ENCODE measurements at regions of chrX and their contacts with region 1.

Region 1: GRCh38 chrX:37315511-37316248 is 33.5 kb upstream of the PRRG1 start:
- DNase-seq: peak; percentile 37
- H3K4me3 ChIP-seq: no peak overlapping the region
- H3K27ac ChIP-seq: peak overlapping the region; percentile 86
- H3K4me1 ChIP-seq: peaks cover 31% of the 10 kb centered on the region
- H3K27me3 ChIP-seq: no peaks in the 10 kb centered on the region
- CTCF ChIP-seq: no peak
- POLR2A ChIP-seq: no peak

Region 2: DNA sequence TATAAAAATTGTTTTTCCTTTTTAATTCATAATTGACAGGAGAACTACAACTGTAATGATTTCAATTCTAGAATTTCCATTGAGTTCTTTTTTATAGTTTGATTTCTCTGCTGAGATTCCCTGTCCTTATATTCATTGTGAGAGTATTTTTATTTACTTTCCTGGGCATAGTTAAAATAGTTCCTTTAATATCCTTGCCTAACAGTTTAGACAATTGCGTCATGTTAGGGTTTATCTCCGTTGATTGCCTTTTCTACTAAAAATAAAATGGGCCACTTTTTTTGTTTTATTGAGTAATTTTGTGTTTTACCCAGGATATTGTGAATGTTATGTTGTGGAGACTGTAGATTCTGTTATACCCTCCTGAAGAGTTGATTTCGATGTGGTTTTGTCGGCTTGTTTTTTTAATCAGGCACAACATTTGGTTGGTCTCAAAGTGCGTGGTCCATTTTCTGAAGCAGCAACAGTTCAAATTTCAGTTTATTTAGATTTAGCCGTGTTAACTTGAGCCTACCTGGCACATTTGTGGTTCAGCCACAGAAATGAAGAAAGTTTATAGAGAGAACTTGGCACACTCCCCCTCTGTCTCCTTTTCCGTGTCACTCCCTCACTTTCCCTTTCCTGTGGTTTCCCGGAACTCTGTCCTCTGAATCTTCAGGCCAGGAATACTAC is 17.4 kb after region 1 on chrX:
- CTCF ChIA-PET with region 1: no interaction called
- POLR2A ChIA-PET with region 1: no interaction called
- dilution Hi-C with region 1: no loop called
- intact Hi-C with region 1: no loop called
- DNase-seq: no peak
- H3K4me3 ChIP-seq: no peak overlapping the region
- H3K27ac ChIP-seq: no peak overlapping the region
- H3K4me1 ChIP-seq: peaks cover 6% of the 10 kb centered on the region
- H3K27me3 ChIP-seq: no peaks in the 10 kb centered on the region
- CTCF ChIP-seq: no peak
- POLR2A ChIP-seq: no peak

Region 3: DNA sequence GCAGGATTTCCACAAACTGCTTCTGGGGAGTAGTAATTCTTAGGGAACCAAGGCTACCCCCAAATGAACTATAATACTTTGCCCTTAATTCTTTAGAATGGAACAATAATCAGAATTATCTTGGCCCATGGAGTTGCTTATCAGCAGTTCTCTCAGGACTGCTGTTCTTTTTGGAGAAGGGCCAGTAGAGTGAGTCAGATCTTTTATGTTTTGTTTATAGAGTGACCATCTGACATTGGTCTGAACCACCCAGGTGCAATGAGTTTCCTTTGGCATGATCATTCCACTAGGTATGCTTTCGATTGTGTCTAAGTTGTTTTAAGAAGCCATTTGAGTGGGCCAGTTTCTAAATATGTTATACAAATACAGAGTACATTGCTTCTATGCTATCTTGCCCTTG is 65.2 kb after region 1 on chrX:
- CTCF ChIA-PET with region 1: no interaction called
- POLR2A ChIA-PET with region 1: no interaction called
- dilution Hi-C with region 1: no loop called
- intact Hi-C with region 1: loop called (anchors 2 kb)
- DNase-seq: peak; percentile 91
- H3K4me3 ChIP-seq: no peak overlapping the region
- H3K27ac ChIP-seq: peak overlapping the region; percentile 53
- H3K4me1 ChIP-seq: peaks cover 37% of the 10 kb centered on the region
- H3K27me3 ChIP-seq: no peaks in the 10 kb centered on the region
- CTCF ChIP-seq: no peak
- POLR2A ChIP-seq: peak; percentile 26

Region 4: GRCh38 chrX:37594755-37595382 is 279.2 kb after region 1 on chrX:
- CTCF ChIA-PET with region 1: no interaction called
- POLR2A ChIA-PET with region 1: no interaction called
- dilution Hi-C with region 1: no loop called
- intact Hi-C with region 1: no loop called
- DNase-seq: no peak
- H3K4me3 ChIP-seq: no peak overlapping the region
- H3K27ac ChIP-seq: no peak overlapping the region
- H3K4me1 ChIP-seq: no peaks in the 10 kb centered on the region
- H3K27me3 ChIP-seq: no peaks in the 10 kb centered on the region
- CTCF ChIP-seq: no peak
- POLR2A ChIP-seq: no peak

Measured in endothelial cell of umbilical vein (primary cell).